T-cell (primary cell): ENCODE measurements at regions of chr5 and their contacts with region 1.

Region 1: DNA sequence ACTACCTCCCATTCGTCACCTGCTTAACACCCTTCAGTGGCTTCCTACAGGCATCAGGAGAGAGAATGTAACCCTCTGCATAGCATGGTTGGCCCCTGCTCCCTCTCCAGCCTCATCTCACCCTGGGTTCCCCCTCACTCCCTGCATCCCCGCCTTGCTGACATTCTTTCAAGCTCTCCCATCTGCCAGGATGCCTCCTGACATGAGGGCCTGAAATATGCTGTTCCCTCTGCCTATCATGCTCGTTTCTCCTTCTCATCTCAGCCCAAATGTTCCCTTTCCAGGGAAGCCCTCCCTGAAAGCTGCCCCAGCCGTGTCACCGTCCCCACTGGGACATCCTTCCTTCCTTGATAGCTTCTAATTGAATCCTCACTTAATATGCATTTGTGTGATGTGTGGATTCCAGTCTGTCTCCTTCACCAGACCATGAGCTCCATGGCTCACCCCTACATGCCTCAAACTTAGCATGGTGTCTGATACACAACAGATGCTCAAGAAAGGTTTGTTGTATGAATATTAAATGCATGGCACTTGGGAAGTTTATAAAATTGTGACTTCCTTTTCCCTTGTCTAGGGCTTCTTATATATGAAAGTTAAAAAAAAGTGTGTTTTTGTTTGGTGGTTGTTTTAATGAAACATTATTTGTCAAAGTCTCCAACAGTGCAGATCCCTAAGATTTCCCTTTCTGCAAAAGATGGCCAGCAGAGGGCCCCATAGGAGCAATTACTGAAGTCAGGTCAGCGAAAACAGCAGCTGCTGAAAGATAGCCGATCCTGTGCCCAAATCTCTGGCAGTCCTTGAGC is 7.3 kb upstream of the C5orf58 start:
- DNase-seq: peak; percentile 37 to 85 (median 71)
- ATAC-seq: peak; percentile 54 to 82 (median 67)
- H3K4me3 ChIP-seq: no peak overlapping the region
- H3K4me3 Mint-ChIP-seq: no peak overlapping the region
- H3K27ac ChIP-seq: no peak overlapping the region
- H3K27ac Mint-ChIP-seq: no peak overlapping the region
- H3K4me1 ChIP-seq: peaks cover 0 to 5% of the 10 kb centered on the region in 2 experiments
- H3K4me1 Mint-ChIP-seq: peaks cover 4 to 13% (median 4%) of the 10 kb centered on the region in 3 donors
- H3K27me3 ChIP-seq: no peaks in the 10 kb centered on the region
- H3K27me3 Mint-ChIP-seq: no peaks in the 10 kb centered on the region

Region 2: DNA sequence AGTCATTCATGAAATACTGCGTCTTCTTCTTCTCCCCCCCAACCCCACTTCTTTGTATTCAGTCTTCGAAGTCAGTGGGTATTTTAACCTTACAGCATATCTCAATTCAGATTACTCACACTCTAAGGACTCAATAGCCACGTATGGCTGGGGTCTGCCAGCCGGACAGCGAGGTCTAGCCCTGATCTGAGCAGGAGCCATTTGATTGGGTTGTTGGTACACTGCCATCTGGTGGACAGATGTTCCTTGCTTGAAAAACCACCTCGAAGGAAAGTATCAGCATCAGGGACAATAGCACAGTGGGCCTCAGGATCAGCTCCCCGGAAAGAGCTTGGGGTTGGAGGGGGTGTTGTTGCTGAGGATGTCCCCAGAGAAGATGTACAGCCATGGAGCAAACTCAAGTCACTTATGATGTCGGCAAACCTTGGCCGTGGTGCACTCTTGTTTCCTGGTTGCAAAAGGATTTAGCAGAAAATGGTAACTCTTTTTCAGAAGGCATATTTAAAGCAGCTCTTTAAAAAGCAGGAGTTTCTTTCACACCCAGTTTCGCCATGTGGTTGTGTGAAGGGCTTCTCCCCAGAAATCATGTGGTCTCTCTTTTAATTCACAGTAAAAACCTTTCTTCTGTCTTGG is 195.4 kb after region 1 on chr5:
- CTCF ChIA-PET with region 1: interaction called, 11 to 13 read pairs
- POLR2A ChIA-PET with region 1: no interaction called
- DNase-seq: peak in 32 of 35 experiments; percentile 6 to 79 (median 36)
- ATAC-seq: peak; percentile 33 to 58 (median 46)
- H3K4me3 ChIP-seq: no peak overlapping the region
- H3K4me3 Mint-ChIP-seq: no peak overlapping the region
- H3K27ac ChIP-seq: no peak overlapping the region
- H3K27ac Mint-ChIP-seq: no peak overlapping the region
- H3K4me1 ChIP-seq: peaks cover 15 to 16% of the 10 kb centered on the region in 2 experiments
- H3K4me1 Mint-ChIP-seq: peaks cover 30 to 35% (median 30%) of the 10 kb centered on the region in 3 donors
- H3K27me3 ChIP-seq: peaks cover 0 to 11% of the 10 kb centered on the region in 2 experiments
- H3K27me3 Mint-ChIP-seq: peaks cover 1 to 7% of the 10 kb centered on the region in 2 donors